ENCODE measurements at regions of chr5 and their contacts with region 1.

Region 1: DNA sequence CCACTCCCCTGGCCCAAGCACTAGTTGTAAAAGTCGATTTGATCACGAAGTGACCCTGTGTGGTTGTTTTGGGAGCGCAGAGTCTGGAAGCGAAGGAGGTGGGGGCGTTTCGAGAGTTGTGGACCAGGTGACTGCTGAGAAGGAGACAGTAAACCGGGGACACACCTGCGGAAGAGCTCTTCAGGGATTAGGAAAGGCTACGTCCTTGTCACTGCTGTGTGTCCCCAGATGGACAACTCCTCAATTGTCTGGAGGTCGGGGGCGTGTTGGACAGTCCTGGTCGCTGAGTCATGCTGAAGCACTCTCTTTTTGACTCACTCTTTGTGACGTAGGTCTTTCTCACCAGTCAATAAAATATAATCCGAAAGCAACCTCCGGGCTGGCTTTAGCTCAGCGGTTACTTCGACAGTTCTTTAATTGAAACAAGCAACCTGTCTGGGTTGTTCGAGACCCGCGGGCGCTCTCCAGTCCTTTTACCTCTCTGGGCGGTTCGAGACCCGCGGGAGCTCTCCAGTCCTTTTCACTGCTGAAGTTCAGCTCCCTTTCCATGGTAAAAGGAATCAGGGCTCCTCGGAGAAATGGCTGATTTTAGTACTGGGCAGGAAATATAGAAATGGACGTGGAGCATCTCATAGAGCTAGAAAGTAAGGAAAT is 10.8 kb downstream of the ZMAT2 start:
- DNase-seq: peak; percentile 91
- H3K4me3 Mint-ChIP-seq: peak overlapping the region; percentile 80
- H3K27ac Mint-ChIP-seq: peak overlapping the region; percentile 90
- H3K4me1 Mint-ChIP-seq: peaks cover 23% of the 10 kb centered on the region
- H3K27me3 Mint-ChIP-seq: peaks cover 5% of the 10 kb centered on the region

Region 2: GRCh38 chr5:140725799-140726471 is 14.9 kb after region 1 on chr5:
- CTCF ChIA-PET with region 1: interaction called, 14 read pairs
- POLR2A ChIA-PET with region 1: interaction called, 13 read pairs
- DNase-seq: peak; percentile 82
- H3K4me3 Mint-ChIP-seq: peak overlapping the region; percentile 70
- H3K27ac Mint-ChIP-seq: peak overlapping the region; percentile 71
- H3K4me1 Mint-ChIP-seq: peaks cover 18% of the 10 kb centered on the region
- H3K27me3 Mint-ChIP-seq: peaks cover 11% of the 10 kb centered on the region